Activated CD4-positive, alpha-beta T cell treated with anti-CD3 and anti-CD28 coated beads, Interleukin-2, amount 10 ng/mL, durations not matched to agents 24 days and 14 days (primary cell): ENCODE measurements at regions of chr19 and their contacts with region 1.

Region 1: GRCh38 chr19:17555480-17555928 is at the start of gene COLGALT1:
- DNase-seq: peak; percentile 100
- H3K4me3 Mint-ChIP-seq: peak within 1 kb of the TSS; percentile 90
- H3K27ac Mint-ChIP-seq: peak within 1 kb of the TSS; percentile 83
- H3K4me1 Mint-ChIP-seq: peaks cover 13% of the 10 kb centered on the region
- H3K27me3 Mint-ChIP-seq: no peaks in the 10 kb centered on the region
- total RNA-seq, gene COLGALT1: 103 and 106 TPM in 2 replicates

Region 2: GRCh38 chr19:17539238-17540117 is 16.0 kb before region 1 on chr19:
- intact Hi-C with region 1: loop called (anchors 1 kb)
- DNase-seq: peak; percentile 99
- H3K4me3 Mint-ChIP-seq: peak overlapping the region; percentile 86
- H3K27ac Mint-ChIP-seq: peak overlapping the region; percentile 64
- H3K4me1 Mint-ChIP-seq: peaks cover 13% of the 10 kb centered on the region
- H3K27me3 Mint-ChIP-seq: peaks cover 18% of the 10 kb centered on the region